ENCODE measurements at regions of chr21 and their contacts with region 1.

Region 1: GRCh38 chr21:38869946-38870345 is 64.2 kb downstream of the ETS2 start:
- DNase-seq: no peak
- H3K4me3 Mint-ChIP-seq: no peak overlapping the region
- H3K27ac Mint-ChIP-seq: no peak overlapping the region
- H3K4me1 Mint-ChIP-seq: peaks cover 10% of the 10 kb centered on the region
- H3K27me3 Mint-ChIP-seq: peaks cover 19% of the 10 kb centered on the region

Region 2: GRCh38 chr21:38811257-38811656 is 58.7 kb before region 1 on chr21:
- intact Hi-C with region 1: loop called (anchors 10 kb)
- DNase-seq: no peak
- H3K4me3 Mint-ChIP-seq: no peak overlapping the region
- H3K27ac Mint-ChIP-seq: no peak overlapping the region
- H3K4me1 Mint-ChIP-seq: peaks cover 55% of the 10 kb centered on the region
- H3K27me3 Mint-ChIP-seq: no peaks in the 10 kb centered on the region